CD8-positive, alpha-beta T cell (primary cell): ENCODE measurements at regions of chr1 and their contacts with region 1.

Region 1: DNA sequence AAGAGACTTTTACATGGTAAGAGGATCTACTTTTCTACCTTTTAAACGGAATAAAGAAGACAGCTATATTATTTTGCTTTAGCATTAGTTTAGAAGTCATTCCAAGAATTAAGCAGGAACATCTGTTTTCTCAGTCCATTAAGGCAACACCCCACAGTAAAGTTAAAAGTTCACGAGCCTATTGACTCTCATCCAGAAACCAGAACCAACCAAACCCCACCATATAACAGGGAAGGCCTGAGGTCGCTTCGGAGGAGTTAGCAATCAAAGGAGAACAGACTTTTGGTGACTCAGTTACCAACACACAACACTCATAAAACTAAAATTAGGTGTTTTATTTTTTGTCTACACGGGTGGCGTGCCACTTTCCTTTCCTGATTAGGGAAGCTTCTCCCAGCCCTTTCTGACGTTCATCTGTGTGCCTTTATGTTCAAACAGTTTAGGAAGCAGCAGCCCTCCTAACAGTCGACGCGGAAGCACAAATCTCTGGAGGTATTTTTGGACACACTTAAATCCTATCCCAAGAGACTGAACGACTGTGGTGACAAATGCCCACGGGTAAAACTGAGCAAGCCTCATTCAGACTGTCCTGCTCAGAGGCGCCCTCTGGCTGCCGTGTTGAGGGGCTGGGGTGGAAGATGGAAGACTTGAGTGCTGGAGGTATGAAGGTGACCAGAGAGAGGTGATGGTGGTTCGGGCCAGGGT is 8.6 kb upstream of the PLA2G2C start:
- DNase-seq: peak; percentile 46 to 78 (median 71)
- ATAC-seq: peak; percentile 71
- H3K4me3 ChIP-seq: no peak overlapping the region
- H3K4me3 Mint-ChIP-seq: no peak overlapping the region
- H3K27ac ChIP-seq: no peak overlapping the region
- H3K27ac Mint-ChIP-seq: no peak overlapping the region
- H3K4me1 ChIP-seq: no peaks in the 10 kb centered on the region
- H3K4me1 Mint-ChIP-seq: peaks cover 2% of the 10 kb centered on the region
- H3K27me3 ChIP-seq: no peaks in the 10 kb centered on the region
- H3K27me3 Mint-ChIP-seq: peaks cover 8% of the 10 kb centered on the region
- CTCF ChIP-seq: peak; percentile 85

Region 2: GRCh38 chr1:19918057-19918456 is 276.9 kb before region 1 on chr1:
- CTCF ChIA-PET with region 1: interaction called, 94 read pairs
- POLR2A ChIA-PET with region 1: no interaction called
- intact Hi-C with region 1: loop called (anchors 1 kb)
- DNase-seq: peak; percentile 67 to 88 (median 81)
- ATAC-seq: peak; percentile 57
- H3K4me3 ChIP-seq: no peak overlapping the region
- H3K4me3 Mint-ChIP-seq: no peak overlapping the region
- H3K27ac ChIP-seq: no peak overlapping the region
- H3K27ac Mint-ChIP-seq: no peak overlapping the region
- H3K4me1 ChIP-seq: no peaks in the 10 kb centered on the region
- H3K4me1 Mint-ChIP-seq: peaks cover 2% of the 10 kb centered on the region
- H3K27me3 ChIP-seq: no peaks in the 10 kb centered on the region
- H3K27me3 Mint-ChIP-seq: peaks cover 5% of the 10 kb centered on the region
- CTCF ChIP-seq: peak; percentile 88

Region 3: GRCh38 chr1:20100632-20101355 is 94.1 kb before region 1 on chr1:
- CTCF ChIA-PET with region 1: interaction called, 3 read pairs
- POLR2A ChIA-PET with region 1: no interaction called
- intact Hi-C with region 1: loop called in 1 of 2 experiments (anchors 2 kb)
- DNase-seq: peak in 3 of 9 experiments; percentile 12 to 27 (median 15)
- ATAC-seq: no peak
- H3K4me3 ChIP-seq: no peak overlapping the region
- H3K4me3 Mint-ChIP-seq: no peak overlapping the region
- H3K27ac ChIP-seq: no peak overlapping the region
- H3K27ac Mint-ChIP-seq: no peak overlapping the region
- H3K4me1 ChIP-seq: no peaks in the 10 kb centered on the region
- H3K4me1 Mint-ChIP-seq: no peaks in the 10 kb centered on the region
- H3K27me3 ChIP-seq: no peaks in the 10 kb centered on the region
- H3K27me3 Mint-ChIP-seq: peaks cover 7% of the 10 kb centered on the region
- CTCF ChIP-seq: peak; percentile 29

Region 4: DNA sequence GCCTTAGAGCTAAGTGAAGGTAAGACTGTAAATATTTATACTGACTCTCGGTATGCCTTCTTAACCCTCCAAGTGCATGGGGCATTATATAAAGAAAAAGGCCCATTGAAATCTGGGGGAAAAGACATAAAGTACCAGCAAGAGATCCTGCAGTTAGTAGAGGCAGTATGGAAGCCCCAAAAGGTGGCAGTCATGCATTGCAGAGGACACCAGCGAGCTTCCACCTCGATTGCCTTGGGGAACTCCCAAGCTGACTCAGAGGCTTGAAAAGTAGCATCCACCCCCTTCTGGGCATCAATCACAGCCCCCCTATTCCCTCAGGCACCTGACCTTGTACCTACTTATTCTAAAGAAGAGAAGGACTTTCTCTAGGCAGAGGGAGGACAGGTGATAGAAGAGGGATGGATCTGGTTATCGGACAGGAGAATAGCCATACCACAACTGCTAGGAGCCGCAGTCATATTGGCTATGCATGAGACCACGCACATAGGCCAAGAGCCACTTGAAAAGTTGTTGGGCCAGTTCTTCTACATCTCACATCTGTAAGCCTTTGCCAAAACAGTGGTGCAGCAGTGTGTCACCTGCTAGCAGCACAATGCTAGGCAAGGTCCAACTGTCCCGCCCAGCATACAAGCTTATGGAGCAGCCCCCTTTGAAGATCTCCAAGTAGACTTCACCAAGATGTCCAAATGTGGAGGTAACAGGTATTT is 36.4 kb before region 1 on chr1:
- CTCF ChIA-PET with region 1: interaction called, 34 read pairs
- POLR2A ChIA-PET with region 1: no interaction called
- intact Hi-C with region 1: loop called (anchors 2 to 5 kb)
- DNase-seq: no peak
- ATAC-seq: no peak
- H3K4me3 ChIP-seq: no peak overlapping the region
- H3K4me3 Mint-ChIP-seq: no peak overlapping the region
- H3K27ac ChIP-seq: no peak overlapping the region
- H3K27ac Mint-ChIP-seq: no peak overlapping the region
- H3K4me1 ChIP-seq: no peaks in the 10 kb centered on the region
- H3K4me1 Mint-ChIP-seq: peaks cover 7% of the 10 kb centered on the region
- H3K27me3 ChIP-seq: no peaks in the 10 kb centered on the region
- H3K27me3 Mint-ChIP-seq: peaks cover 2% of the 10 kb centered on the region
- CTCF ChIP-seq: no peak

Region 5: GRCh38 chr1:20174937-20175666 is 19.8 kb before region 1 on chr1:
- CTCF ChIA-PET with region 1: interaction called, 55 read pairs
- POLR2A ChIA-PET with region 1: no interaction called
- intact Hi-C with region 1: no loop called
- DNase-seq: no peak
- ATAC-seq: no peak
- H3K4me3 ChIP-seq: no peak overlapping the region
- H3K4me3 Mint-ChIP-seq: no peak overlapping the region
- H3K27ac ChIP-seq: no peak overlapping the region
- H3K27ac Mint-ChIP-seq: no peak overlapping the region
- H3K4me1 ChIP-seq: peaks cover 3% of the 10 kb centered on the region
- H3K4me1 Mint-ChIP-seq: peaks cover 6% of the 10 kb centered on the region
- H3K27me3 ChIP-seq: no peaks in the 10 kb centered on the region
- H3K27me3 Mint-ChIP-seq: no peaks in the 10 kb centered on the region
- CTCF ChIP-seq: no peak

Region 6: GRCh38 chr1:20212685-20213331 is 17.9 kb after region 1 on chr1:
- CTCF ChIA-PET with region 1: interaction called, 30 read pairs
- POLR2A ChIA-PET with region 1: no interaction called
- intact Hi-C with region 1: no loop called
- DNase-seq: peak; percentile 14 to 70 (median 46)
- ATAC-seq: peak; percentile 55
- H3K4me3 ChIP-seq: no peak overlapping the region
- H3K4me3 Mint-ChIP-seq: peak overlapping the region; percentile 59
- H3K27ac ChIP-seq: no peak overlapping the region
- H3K27ac Mint-ChIP-seq: no peak overlapping the region
- H3K4me1 ChIP-seq: peaks cover 6% of the 10 kb centered on the region
- H3K4me1 Mint-ChIP-seq: peaks cover 5% of the 10 kb centered on the region
- H3K27me3 ChIP-seq: peaks cover 0 to 4% of the 10 kb centered on the region in 2 experiments
- H3K27me3 Mint-ChIP-seq: peaks cover 44% of the 10 kb centered on the region
- CTCF ChIP-seq: peak; percentile 83